Transverse colon (tissue), 4 donors: ENCODE measurements at regions of chr11 and their contacts with region 1.

Region 1: GRCh38 chr11:61627567-61628445 is 46.9 kb upstream of the SYT7 start:
- DNase-seq: peak; percentile 72
- H3K4me3 ChIP-seq: no peak overlapping the region
- H3K27ac ChIP-seq: no peak overlapping the region
- H3K4me1 ChIP-seq: peaks cover 0 to 17% (median 2%) of the 10 kb centered on the region in 4 donors
- H3K27me3 ChIP-seq: no peaks in the 10 kb centered on the region
- CTCF ChIP-seq: peak; percentile 63 to 87 (median 73)
- EP300 ChIP-seq: no peak
- POLR2A ChIP-seq: no peak

Region 2: DNA sequence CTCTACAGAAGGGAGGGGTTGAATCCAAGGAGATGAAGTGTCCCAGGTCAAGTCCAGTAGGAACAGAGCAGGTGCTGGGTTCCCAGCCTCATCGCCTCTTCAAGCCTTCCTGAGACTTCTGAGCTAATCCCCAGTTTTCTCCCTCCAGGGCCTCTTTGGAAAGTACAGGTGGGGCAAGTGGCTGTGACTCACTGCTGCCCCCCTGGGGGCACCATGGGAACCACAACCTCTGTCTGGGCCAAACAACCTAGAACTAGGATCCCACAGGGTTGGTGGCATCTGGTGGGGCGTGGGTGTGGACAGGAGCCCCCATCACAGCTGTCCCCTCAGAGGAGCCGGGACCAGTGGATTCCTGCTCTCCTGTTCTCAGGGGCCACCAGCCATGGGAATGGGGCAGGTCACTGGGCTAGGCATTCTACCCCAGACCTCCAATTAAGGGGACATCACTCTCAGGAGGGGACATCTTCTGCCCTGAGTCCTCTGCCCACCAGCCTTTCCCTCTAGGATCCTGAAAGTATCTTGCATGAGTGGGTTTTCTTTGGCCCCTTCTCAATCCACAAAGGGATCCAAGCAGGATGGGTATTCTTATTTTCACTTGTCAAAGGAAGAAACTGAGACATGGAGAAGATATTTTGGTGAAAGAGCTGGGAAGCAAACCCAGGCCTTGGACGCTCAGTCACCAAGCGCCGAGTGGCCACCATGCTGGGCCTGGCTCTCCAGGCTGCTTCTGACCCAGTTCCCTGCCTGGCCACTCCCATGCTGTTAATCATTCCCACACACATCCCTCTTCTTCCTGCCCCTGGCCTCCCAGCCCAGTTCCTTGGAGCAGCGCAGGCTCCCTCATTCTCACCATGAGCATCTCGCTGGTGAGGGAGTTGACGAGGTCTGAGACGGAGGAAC is 95.4 kb before region 1 on chr11:
- in situ Hi-C with region 1: no loop called
- intact Hi-C with region 1: loop called (anchors 10 kb)
- DNase-seq: peak; percentile 61
- H3K4me3 ChIP-seq: no peak overlapping the region
- H3K27ac ChIP-seq: peak overlapping the region in 3 of 4 donors; percentile 54 to 76 (median 73)
- H3K4me1 ChIP-seq: peaks cover 0 to 30% (median 22%) of the 10 kb centered on the region in 4 donors
- H3K27me3 ChIP-seq: no peaks in the 10 kb centered on the region
- CTCF ChIP-seq: peak; percentile 70 to 78 (median 75)
- EP300 ChIP-seq: no peak
- POLR2A ChIP-seq: no peak

Region 3: GRCh38 chr11:61602775-61603569 is 24.8 kb before region 1 on chr11:
- in situ Hi-C with region 1: no loop called
- intact Hi-C with region 1: loop called (anchors 1 kb)
- DNase-seq: peak; percentile 69
- H3K4me3 ChIP-seq: no peak overlapping the region
- H3K27ac ChIP-seq: peak overlapping the region; percentile 51 to 61 (median 58)
- H3K4me1 ChIP-seq: peaks cover 0 to 27% (median 16%) of the 10 kb centered on the region in 4 donors
- H3K27me3 ChIP-seq: no peaks in the 10 kb centered on the region
- CTCF ChIP-seq: no peak
- EP300 ChIP-seq: no peak
- POLR2A ChIP-seq: no peak

Region 4: DNA sequence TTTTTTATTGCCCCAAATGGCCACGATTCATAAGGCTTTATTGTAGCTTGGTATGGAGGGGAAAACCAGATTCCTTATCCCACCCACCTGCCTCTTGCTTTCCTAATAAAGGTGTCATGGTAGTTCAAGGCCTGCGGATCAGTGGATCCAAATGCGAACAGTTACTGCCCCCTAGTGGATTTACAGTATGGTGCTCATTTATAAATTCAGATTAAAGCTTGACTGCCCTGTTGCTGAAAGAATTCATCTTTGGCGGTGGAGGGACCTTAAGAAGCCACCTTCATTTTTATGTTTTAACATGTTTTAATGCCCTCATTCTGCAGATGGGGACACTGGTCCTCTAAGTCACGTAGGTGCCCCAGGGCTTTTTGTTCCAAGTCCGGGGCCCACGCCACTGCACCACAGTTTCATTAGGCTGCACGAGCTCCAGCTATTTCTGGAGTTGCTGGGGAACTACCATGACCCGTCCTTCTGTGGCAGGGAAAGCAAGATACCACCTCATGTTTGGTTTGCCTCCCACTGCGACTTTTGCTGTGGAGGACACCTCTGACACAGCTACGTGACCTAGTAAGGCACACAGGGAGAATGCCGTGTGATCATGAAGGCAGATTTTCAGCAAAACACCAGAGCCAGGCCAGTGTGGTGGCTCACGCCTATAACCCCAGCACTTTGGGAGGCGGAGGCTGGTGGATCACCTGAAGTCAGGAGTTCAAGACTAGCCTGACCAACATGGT is 480.4 kb after region 1 on chr11:
- in situ Hi-C with region 1: no loop called
- intact Hi-C with region 1: no loop called
- DNase-seq: no peak
- H3K4me3 ChIP-seq: no peak overlapping the region
- H3K27ac ChIP-seq: no peak overlapping the region
- H3K4me1 ChIP-seq: peaks cover 6 to 26% (median 12%) of the 10 kb centered on the region in 4 donors
- H3K27me3 ChIP-seq: no peaks in the 10 kb centered on the region
- CTCF ChIP-seq: peak; percentile 72 to 85 (median 84)
- EP300 ChIP-seq: no peak
- POLR2A ChIP-seq: no peak